Mucosa of descending colon (tissue), 3 donors: ENCODE measurements at regions of chr22 and their contacts with region 1.

Region 1: GRCh38 chr22:35043252-35043931 is 22.6 kb upstream of the ISX start:
- DNase-seq: peak in 2 of 3 donors; percentile 68 to 75
- ATAC-seq: peak; percentile 68
- H3K4me3 ChIP-seq: no peak overlapping the region
- H3K4me1 ChIP-seq: peaks cover 4% of the 10 kb centered on the region
- CTCF ChIP-seq: peak; percentile 26

Region 2: GRCh38 chr22:34834059-34834458 is 209.3 kb before region 1 on chr22:
- intact Hi-C with region 1: no loop called
- DNase-seq: no peak
- ATAC-seq: no peak
- H3K4me3 ChIP-seq: no peak overlapping the region
- H3K4me1 ChIP-seq: no peaks in the 10 kb centered on the region
- CTCF ChIP-seq: no peak

Region 3: GRCh38 chr22:35135165-35135564 is 91.8 kb after region 1 on chr22:
- intact Hi-C with region 1: loop called in 1 of 2 experiments (anchors 10 kb)
- DNase-seq: peak in 1 of 3 donors; percentile 53
- ATAC-seq: peak; percentile 16
- H3K4me3 ChIP-seq: no peak overlapping the region
- H3K4me1 ChIP-seq: peaks cover 31% of the 10 kb centered on the region
- CTCF ChIP-seq: no peak